T-cell (primary cell): ENCODE measurements at regions of chr17 and their contacts with region 1.

Region 1: DNA sequence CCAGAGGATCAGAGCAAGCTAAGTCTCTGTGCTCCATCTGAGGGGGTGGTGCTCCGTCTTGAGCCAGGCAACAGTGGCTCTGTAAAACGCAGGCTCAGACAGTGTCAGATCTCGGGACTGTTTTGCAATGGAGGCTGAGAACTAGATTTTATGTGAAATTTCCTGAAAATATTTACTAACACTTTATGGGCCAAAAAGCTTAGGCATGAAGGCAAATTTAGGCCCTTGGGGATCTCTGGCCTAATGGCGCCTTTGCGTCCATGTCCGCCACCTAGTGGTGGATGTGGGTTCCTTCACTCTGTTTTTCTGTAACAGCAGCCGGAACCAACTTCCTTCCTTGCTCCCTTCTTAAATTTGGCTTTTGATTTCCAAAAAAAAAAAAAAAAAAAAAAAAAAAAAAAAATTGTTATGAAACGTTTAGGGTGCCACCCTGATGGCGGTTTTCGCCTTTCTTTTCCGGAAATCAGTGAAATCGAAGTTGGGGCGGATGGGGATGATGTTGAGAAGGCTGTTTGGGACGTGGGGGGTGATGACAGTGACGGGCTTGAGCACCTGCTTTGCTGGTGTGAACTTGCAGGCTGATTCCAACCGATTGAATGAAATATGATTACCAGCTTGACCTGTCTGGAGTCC is 14.0 kb upstream of the ELAC2 start:
- DNase-seq: peak in 31 of 35 experiments; percentile 5 to 71 (median 34)
- ATAC-seq: peak; percentile 60 to 75 (median 62)
- H3K4me3 ChIP-seq: no peak overlapping the region
- H3K4me3 Mint-ChIP-seq: no peak overlapping the region
- H3K27ac ChIP-seq: no peak overlapping the region
- H3K27ac Mint-ChIP-seq: peak overlapping the region; percentile 44 to 70
- H3K4me1 ChIP-seq: peaks cover 0 to 10% of the 10 kb centered on the region in 2 experiments
- H3K4me1 Mint-ChIP-seq: peaks cover 8 to 16% (median 14%) of the 10 kb centered on the region in 3 donors
- H3K27me3 ChIP-seq: peaks cover 0 to 1% of the 10 kb centered on the region in 2 experiments
- H3K27me3 Mint-ChIP-seq: peaks cover 7 to 8% of the 10 kb centered on the region in 2 donors

Region 2: GRCh38 chr17:12983991-12984884 is 47.6 kb before region 1 on chr17:
- CTCF ChIA-PET with region 1: no interaction called
- POLR2A ChIA-PET with region 1: no interaction called
- DNase-seq: no peak
- ATAC-seq: no peak
- H3K4me3 ChIP-seq: no peak overlapping the region
- H3K4me3 Mint-ChIP-seq: no peak overlapping the region
- H3K27ac ChIP-seq: no peak overlapping the region
- H3K27ac Mint-ChIP-seq: no peak overlapping the region
- H3K4me1 ChIP-seq: peaks cover 0 to 8% of the 10 kb centered on the region in 2 experiments
- H3K4me1 Mint-ChIP-seq: peaks cover 0 to 7% (median 4%) of the 10 kb centered on the region in 3 donors
- H3K27me3 ChIP-seq: peaks cover 0 to 17% of the 10 kb centered on the region in 2 experiments
- H3K27me3 Mint-ChIP-seq: peaks cover 8 to 13% of the 10 kb centered on the region in 2 donors

Region 3: GRCh38 chr17:13017659-13018459 is 14.0 kb before region 1 on chr17 and contains the start of gene ELAC2:
- CTCF ChIA-PET with region 1: interaction called, 50 to 93 read pairs
- POLR2A ChIA-PET with region 1: interaction called in 1 of 2 experiments, 3 read pairs
- DNase-seq: peak; percentile 88 to 97 (median 93)
- ATAC-seq: peak; percentile 99 to 100 (median 100)
- H3K4me3 ChIP-seq: peak within 1 kb of the TSS; percentile 88 to 94
- H3K4me3 Mint-ChIP-seq: peak within 1 kb of the TSS; percentile 95 to 97 (median 97)
- H3K27ac ChIP-seq: peak within 1 kb of the TSS; percentile 63
- H3K27ac Mint-ChIP-seq: peak within 1 kb of the TSS; percentile 96 to 97
- H3K4me1 ChIP-seq: peaks cover 5 to 23% of the 10 kb centered on the region in 2 experiments
- H3K4me1 Mint-ChIP-seq: peaks cover 30 to 40% (median 38%) of the 10 kb centered on the region in 3 donors
- H3K27me3 ChIP-seq: no peaks in the 10 kb centered on the region
- H3K27me3 Mint-ChIP-seq: no peaks in the 10 kb centered on the region
- total RNA-seq, gene ELAC2: 62.5 to 71.6 (median 66.4) TPM

Region 4: DNA sequence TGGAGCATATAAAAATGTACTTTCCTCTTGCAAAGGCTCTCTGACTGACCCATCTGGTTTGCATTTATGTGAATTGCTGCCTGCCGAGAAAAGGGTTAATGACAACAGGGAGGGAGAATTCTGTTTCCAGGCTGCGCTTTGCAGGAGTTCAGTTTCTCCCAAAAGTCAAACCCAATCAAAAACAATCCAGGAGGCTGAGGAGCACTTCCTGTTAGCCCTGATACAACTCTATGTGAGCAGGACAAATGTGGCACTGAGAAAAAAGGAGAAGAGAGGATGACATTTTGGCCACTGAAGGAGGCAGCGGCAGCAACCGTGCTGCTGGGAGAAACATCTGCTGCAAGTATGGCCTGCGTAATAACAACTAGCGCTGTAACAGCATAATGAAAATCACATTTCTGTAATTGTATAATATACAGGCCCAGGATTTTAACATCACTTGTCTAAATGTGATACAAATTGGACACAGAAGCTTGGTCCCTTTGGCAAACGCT is 12.8 kb after region 1 on chr17:
- CTCF ChIA-PET with region 1: interaction called, 4 to 12 read pairs
- POLR2A ChIA-PET with region 1: no interaction called
- DNase-seq: no peak
- ATAC-seq: no peak
- H3K4me3 ChIP-seq: no peak overlapping the region
- H3K4me3 Mint-ChIP-seq: no peak overlapping the region
- H3K27ac ChIP-seq: no peak overlapping the region
- H3K27ac Mint-ChIP-seq: no peak overlapping the region
- H3K4me1 ChIP-seq: no peaks in the 10 kb centered on the region
- H3K4me1 Mint-ChIP-seq: no peaks in the 10 kb centered on the region
- H3K27me3 ChIP-seq: peaks cover 0 to 9% of the 10 kb centered on the region in 2 experiments
- H3K27me3 Mint-ChIP-seq: peaks cover 19 to 23% of the 10 kb centered on the region in 2 donors